Dorsolateral prefrontal cortex (tissue), 120 donors: ENCODE measurements at regions of chr17 and their contacts with region 1.

Region 1: GRCh38 chr17:47802341-47803022 is 19.1 kb downstream of the OSBPL7 start:
- DNase-seq: peak in 7 of 10 donors; percentile 37 to 63 (median 51)
- H3K4me3 ChIP-seq: no peak overlapping the region
- H3K27ac ChIP-seq: no peak overlapping the region
- H3K27me3 ChIP-seq: no peaks in the 10 kb centered on the region
- CTCF ChIP-seq: peak in 53 of 56 donors; percentile 31 to 69 (median 51)

Region 2: GRCh38 chr17:47621293-47622178 is 180.9 kb before region 1 on chr17:
- intact Hi-C with region 1: no loop called
- DNase-seq: peak in 8 of 10 donors; percentile 33 to 78 (median 60)
- H3K4me3 ChIP-seq: no peak overlapping the region
- H3K27ac ChIP-seq: peak overlapping the region in 48 of 59 donors; percentile 0 to 76 (median 42)
- H3K27me3 ChIP-seq: no peaks in the 10 kb centered on the region
- CTCF ChIP-seq: peak in 7 of 56 donors; percentile 5 to 20 (median 14)

Region 3: DNA sequence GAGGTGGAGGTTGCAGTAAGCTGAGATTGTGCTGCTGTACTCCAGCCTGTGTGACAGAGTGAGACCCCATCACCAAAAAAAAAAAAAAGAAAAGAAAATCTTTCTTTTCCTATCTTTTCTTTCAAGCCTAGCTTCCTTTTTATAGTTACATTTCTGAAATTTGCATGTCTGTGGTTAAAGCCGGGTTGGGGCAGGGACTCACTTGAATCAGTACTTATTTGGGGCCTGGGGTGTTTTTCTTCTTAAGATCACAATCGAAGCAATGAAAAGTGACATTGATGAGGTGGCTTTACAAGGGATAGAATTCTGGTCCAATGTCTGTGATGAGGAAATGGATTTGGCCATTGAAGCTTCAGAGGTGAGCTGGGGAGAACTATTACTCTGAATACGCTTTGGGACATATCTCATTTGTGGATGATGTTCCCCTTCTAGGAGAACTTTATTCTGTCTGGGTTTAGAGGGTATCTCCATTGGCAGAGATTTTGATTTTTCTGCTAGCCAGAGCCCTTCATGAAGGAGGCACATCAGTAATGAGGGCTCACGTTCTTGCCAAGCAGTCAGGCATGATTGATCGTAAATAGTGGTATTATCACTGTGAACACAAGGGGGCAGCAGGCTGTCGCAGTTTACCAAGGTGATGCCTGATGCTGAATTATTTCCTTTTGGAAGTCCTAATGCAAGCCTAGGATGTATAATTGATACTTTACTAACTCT is 138.4 kb before region 1 on chr17:
- intact Hi-C with region 1: loop called in 1 of 2 experiments (anchors 5 kb)
- DNase-seq: peak in 8 of 10 donors; percentile 28 to 68 (median 54)
- H3K4me3 ChIP-seq: no peak overlapping the region
- H3K27ac ChIP-seq: peak overlapping the region in 8 of 59 donors; percentile 22 to 57 (median 40)
- H3K27me3 ChIP-seq: no peaks in the 10 kb centered on the region
- CTCF ChIP-seq: peak; percentile 53 to 89 (median 80)

Region 4: DNA sequence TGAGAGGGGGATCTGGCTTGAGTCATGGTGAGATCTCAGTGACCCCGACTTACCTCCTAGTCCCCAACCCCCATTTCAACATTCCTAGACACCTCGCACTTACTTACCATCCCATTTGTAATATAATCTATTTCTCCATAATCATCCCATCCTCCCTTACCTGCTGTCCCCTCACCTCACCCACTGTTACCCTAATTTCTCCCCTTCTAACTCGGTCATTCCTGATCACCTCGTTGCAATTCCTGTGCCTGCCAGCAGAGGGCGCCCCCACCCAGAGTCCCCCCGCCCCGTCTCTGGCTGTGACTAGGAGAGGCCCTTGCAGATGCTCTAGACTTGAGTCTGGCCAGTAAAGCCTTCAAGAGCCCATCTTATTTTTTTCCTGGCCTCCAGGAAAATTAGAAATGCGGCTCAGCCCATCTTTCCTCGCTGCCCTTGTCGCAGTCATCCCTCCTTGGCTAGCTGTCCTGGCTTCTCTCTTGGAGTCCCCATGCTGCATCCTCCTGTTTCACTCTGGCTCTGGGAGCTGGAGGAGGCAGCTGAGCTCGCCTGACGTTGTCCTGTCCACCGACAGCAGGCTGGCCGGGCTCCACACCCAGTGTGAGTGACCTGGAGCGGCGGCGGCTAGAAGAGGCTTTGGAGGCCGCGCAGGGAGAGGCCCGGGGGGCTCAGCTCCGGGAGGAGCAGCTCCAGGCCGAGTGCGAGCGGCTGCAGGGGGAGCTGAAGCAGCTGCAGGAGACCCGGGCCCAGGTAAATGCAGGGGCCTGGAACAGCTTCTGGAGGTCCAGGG is 103.5 kb before region 1 on chr17:
- intact Hi-C with region 1: loop called (anchors 5 to 10 kb)
- DNase-seq: peak; percentile 53 to 83 (median 68)
- H3K4me3 ChIP-seq: no peak overlapping the region
- H3K27ac ChIP-seq: no peak overlapping the region
- H3K27me3 ChIP-seq: no peaks in the 10 kb centered on the region
- CTCF ChIP-seq: peak; percentile 68 to 99 (median 95)

Region 5: GRCh38 chr17:47757386-47757785 is 45.1 kb before region 1 on chr17:
- intact Hi-C with region 1: no loop called
- DNase-seq: no peak
- H3K4me3 ChIP-seq: no peak overlapping the region
- H3K27ac ChIP-seq: no peak overlapping the region
- H3K27me3 ChIP-seq: peaks cover 0 to 27% (median 2%) of the 10 kb centered on the region in 45 donors
- CTCF ChIP-seq: no peak

Region 6: GRCh38 chr17:47924785-47925676 is 122.5 kb after region 1 on chr17:
- intact Hi-C with region 1: no loop called
- DNase-seq: no peak
- H3K4me3 ChIP-seq: no peak overlapping the region
- H3K27ac ChIP-seq: no peak overlapping the region
- H3K27me3 ChIP-seq: no peaks in the 10 kb centered on the region
- CTCF ChIP-seq: no peak